ENCODE measurements at regions of chr17 and their contacts with region 1.

Region 1: DNA sequence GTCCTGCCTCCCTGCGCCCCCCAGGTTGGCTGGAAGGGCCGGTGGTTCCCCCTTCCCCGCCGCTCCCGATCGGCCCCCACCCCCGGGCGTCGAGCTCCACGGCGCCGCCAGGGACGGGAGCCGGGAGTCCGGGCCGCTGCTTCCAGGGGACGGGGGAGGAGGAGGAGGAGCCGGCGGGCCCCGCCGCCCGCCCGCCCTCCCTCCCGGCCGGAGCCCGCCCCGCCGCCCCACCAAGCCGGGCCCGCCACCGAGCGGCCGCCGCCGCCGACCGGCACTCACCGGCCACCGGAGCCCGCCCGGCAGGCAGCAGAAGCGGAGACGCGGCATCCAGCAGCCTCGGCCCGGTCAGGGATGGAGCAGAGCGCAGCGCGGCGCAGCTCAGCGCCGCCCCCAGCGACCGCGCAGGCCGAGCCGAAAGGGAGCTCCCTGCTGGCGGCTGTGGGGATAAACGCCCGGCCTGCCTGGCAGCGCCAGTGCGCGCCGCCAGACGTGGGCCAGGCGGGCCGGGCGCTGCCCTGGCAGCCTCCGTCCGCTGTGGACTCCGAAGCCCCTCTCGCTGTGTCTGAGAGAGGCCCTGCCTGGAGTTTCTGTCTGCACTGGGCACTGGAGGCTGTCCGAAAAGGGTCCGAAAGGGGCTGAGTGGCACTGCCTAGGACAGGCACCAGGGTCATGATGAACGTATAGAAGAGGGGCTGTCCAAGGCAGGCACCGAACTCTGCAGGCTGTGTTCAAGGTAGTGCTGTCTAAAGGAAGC is at the start of gene MYO18A:
- DNase-seq: no peak
- H3K4me3 ChIP-seq: peak within 1 kb of the TSS; percentile 60
- H3K27me3 ChIP-seq: no peaks in the 10 kb centered on the region
- CTCF ChIP-seq: peak; percentile 57
- polyA plus RNA-seq, gene MYO18A: 8.2 and 12.0 TPM in 2 replicates

Region 2: DNA sequence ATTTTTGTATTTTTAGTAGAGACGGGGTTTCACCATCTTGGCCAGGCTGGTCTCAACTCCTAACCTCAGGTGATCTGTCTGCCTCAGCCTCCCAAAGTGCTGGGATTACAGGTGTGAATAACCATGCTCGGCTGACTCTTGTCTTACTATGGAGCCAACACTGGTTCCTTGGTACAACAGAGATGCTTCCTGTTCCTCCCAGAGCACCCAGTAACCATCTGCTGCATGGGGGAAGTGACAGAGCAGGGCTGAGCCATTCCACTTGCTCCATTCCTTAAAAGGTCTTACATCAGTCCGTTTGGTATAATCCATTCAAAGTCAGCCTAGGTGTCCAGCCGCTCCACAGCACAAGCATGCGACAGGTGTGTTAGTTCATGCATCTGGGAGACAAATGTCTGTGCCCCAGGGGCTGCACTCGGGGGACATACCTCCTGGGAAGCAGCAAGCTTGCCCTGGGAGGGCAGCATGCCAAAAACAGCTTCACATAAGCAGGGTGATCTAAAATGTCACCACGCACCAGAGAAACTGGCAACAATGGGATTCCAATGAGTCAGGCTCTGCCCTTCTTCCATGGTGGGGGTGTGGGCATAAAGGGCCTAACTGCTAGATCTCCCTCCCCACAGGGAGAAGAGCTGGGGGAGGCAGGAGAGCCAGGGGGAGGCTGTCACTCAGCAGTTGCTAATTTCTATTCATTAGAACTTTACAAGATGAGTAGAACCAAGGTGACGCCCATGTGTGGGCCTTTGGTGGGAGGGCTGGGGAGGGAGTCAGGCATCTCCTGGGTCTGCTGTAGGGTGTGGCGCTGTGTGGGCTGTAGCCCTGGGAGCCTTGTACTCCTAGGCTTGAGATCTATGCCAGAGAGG is 101.8 kb before region 1 on chr17:
- CTCF ChIA-PET with region 1: no interaction called
- POLR2A ChIA-PET with region 1: no interaction called
- DNase-seq: no peak
- H3K4me3 ChIP-seq: no peak overlapping the region
- H3K27me3 ChIP-seq: no peaks in the 10 kb centered on the region
- CTCF ChIP-seq: no peak

Region 3: DNA sequence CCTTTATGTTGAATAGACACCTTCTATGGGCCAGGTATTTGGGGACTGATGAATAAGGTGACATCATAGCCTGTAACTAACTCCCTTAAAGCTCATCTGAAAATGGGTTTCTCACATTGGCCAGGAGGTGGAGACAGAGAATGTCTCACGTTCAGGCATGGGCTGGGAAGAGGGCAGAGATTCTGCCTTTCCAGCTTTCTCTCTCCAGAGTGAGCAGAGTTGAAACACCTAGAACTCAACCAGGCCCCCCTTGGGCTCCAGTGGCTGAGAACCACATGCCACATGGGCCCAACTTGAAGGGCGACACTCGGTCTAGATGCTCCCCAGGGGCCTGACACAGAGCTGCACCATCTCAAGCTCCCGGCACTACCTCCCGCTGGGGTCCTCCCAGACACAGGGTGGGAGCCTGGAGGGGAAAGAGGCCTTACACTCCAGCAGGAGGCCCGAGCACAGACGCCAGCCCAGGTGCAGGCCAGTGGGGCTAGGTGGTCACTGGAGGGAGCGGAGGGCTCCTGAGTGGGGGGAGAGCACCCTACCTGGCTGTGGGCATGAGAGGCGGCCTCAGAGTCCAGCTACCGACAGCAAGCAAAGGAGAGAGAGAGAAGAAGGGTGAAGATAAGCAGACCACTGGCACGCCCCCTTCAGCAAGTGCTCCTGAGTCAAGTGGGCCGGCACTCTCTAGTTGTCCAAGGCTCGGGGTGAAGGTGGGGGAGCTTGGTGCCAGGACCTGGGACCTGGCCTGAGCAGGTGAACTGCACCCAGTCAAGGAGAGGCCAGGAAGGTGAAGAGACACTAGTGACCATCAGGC is 55.9 kb before region 1 on chr17:
- CTCF ChIA-PET with region 1: interaction called, 19 read pairs
- POLR2A ChIA-PET with region 1: no interaction called
- DNase-seq: no peak
- H3K4me3 ChIP-seq: no peak overlapping the region
- H3K27me3 ChIP-seq: no peaks in the 10 kb centered on the region
- CTCF ChIP-seq: peak; percentile 79

Region 4: GRCh38 chr17:29155227-29155965 is 24.8 kb before region 1 on chr17:
- CTCF ChIA-PET with region 1: interaction called, 227 read pairs
- POLR2A ChIA-PET with region 1: interaction called, 13 read pairs
- DNase-seq: no peak
- H3K4me3 ChIP-seq: no peak overlapping the region
- H3K27me3 ChIP-seq: no peaks in the 10 kb centered on the region
- CTCF ChIP-seq: no peak

Region 5: DNA sequence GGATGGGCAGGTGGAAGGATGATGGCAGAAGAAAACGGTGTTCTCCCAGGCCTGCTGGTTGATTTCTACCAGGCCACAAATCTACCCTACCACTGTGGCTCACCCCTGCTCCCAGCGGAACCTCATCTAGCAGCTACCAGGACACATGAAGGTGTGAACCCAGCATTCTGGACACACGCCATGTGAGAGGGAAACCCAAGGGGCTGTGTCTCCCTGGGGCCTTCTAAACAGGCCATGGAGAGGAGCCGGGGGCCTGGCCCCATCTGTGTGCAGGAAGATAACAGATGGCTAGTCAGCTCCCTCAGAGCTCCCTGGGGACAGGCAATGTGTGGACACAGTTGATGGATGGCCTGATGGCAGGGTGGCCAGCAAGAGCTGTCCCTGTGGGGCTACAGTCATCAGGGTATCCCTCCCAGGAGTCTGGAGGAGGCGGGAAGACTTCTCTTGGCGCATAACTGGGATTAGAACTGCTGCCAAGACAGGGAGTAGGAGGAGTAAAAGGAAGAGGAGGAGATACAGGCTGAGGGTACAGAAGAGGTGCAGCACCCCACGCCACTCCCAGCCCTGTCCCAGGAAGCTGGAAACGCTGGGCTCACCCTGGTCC is 17.4 kb before region 1 on chr17:
- CTCF ChIA-PET with region 1: interaction called, 22 read pairs
- POLR2A ChIA-PET with region 1: interaction called, 4 read pairs
- DNase-seq: no peak
- H3K4me3 ChIP-seq: no peak overlapping the region
- H3K27me3 ChIP-seq: no peaks in the 10 kb centered on the region
- CTCF ChIP-seq: no peak

Region 6: GRCh38 chr17:29195465-29196081 is 15.4 kb after region 1 on chr17:
- CTCF ChIA-PET with region 1: interaction called, 10 read pairs
- POLR2A ChIA-PET with region 1: interaction called, 3 read pairs
- DNase-seq: no peak
- H3K4me3 ChIP-seq: no peak overlapping the region
- H3K27me3 ChIP-seq: no peaks in the 10 kb centered on the region
- CTCF ChIP-seq: no peak

Region 7: DNA sequence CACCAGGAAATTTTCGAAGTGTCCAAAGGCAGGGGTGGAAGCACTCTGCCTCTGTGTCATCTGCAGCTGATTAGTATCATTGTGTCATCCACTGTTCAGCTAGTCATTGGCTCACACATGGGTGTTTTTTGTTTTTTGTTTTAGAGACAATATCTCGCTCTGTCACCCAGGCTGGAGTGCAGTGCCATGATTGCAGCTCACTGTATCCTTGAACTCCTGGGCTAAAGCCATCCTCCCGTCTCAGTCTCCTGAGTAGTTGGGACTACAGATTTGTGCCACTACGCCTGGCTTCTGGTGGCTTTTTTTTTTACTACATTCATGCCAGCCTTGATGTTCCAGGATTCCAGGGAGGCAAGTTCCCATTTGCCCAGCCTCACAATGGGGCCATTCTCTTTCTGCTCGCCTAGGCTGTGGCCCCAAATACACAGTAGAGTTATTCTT is 32.5 kb after region 1 on chr17:
- CTCF ChIA-PET with region 1: interaction called, 54 read pairs
- POLR2A ChIA-PET with region 1: no interaction called
- DNase-seq: peak; percentile 11
- H3K4me3 ChIP-seq: no peak overlapping the region
- H3K27me3 ChIP-seq: no peaks in the 10 kb centered on the region
- CTCF ChIP-seq: no peak